Left lung (tissue), 14 donors: ENCODE measurements at regions of chr17 and their contacts with region 1.

Region 1: DNA sequence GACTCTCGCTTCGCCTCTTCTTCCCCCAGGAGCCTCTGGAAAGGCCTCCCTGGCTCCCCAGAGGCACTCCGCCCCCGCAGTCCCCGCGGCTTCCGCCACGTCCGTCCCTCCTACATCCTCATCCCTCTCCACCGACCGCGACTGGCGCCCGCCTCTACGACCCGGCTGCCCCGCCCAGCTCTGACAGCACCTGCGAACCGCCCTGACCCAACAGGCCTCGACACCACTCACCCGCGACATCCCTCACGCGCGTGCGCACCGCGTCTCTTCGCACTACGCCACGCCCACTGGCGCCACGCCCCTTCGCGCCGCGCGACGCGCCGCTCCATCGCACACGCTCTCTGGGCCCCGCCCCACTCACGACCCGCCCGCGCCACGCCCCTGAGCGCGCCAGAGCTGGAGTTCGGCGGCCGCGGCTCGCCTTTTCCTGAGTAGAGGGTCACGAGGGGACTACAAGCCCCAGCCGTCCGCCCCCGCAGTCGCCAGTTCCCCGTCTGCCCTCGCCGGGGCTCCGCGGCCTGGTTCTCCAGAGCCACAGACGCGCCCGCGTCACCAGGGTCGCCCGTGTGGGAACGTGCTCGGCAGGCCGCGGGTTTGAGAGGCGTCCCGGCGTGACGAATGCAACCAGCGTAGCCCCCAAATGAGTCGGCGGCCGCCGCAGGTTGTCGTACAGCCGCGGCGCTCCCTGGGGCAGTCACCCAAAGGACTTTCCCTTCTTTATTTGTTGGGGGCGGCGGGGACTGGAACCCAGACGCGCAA is 56.2 kb upstream of the LRRC37A3 start:
- DNase-seq: peak; percentile 96 to 100 (median 98)
- ATAC-seq: peak; percentile 97
- H3K4me3 ChIP-seq: peak overlapping the region; percentile 61 to 75
- H3K27ac ChIP-seq: peak overlapping the region; percentile 97
- H3K4me1 ChIP-seq: peaks cover 9 to 24% of the 10 kb centered on the region in 2 donors
- H3K27me3 ChIP-seq: no peaks in the 10 kb centered on the region
- CTCF ChIP-seq: no peak

Region 2: GRCh38 chr17:65055348-65056261 is 80.1 kb after region 1 on chr17:
- intact Hi-C with region 1: loop called in 1 of 2 experiments (anchors 10 kb)
- DNase-seq: peak; percentile 41 to 90 (median 72)
- ATAC-seq: peak; percentile 54
- H3K4me3 ChIP-seq: peak overlapping the region; percentile 72 to 86
- H3K27ac ChIP-seq: peak overlapping the region; percentile 99
- H3K4me1 ChIP-seq: peaks cover 12 to 85% of the 10 kb centered on the region in 2 donors
- H3K27me3 ChIP-seq: no peaks in the 10 kb centered on the region
- CTCF ChIP-seq: no peak

Region 3: GRCh38 chr17:65122836-65123756 is 147.6 kb after region 1 on chr17:
- intact Hi-C with region 1: no loop called
- DNase-seq: peak; percentile 86 to 90 (median 87)
- ATAC-seq: peak; percentile 98
- H3K4me3 ChIP-seq: peak overlapping the region; percentile 59 to 61
- H3K27ac ChIP-seq: peak overlapping the region; percentile 88 to 89
- H3K4me1 ChIP-seq: peaks cover 0 to 17% of the 10 kb centered on the region in 2 donors
- H3K27me3 ChIP-seq: no peaks in the 10 kb centered on the region
- CTCF ChIP-seq: no peak